ENCODE measurements at regions of chr2 and their contacts with region 1.

Region 1: DNA sequence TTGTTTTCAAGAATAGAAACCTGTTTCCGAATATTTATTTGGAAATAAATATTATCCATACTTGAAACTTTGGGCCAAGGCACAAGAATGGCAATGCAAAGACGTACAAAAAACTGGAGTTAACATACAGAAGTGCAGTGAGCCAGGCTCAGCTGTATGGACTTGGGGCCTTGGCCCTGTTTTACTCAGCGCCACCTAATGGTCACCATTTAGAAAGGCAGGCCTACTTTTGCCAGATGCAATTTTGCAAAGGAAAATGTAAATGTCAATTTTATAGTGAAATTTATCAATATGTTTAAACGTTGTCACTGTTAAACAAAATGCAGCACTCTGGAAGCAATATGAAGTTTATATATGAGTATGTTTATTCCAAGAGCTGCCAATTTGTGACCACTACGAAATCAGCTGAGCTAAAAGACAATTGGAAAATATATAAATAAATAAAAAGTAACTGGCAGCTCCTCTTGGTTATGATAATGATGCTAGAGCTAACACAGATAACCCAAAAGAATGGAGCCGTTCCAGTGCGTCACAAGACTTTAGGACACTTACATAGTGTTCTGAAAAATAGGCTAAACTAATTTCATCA is 155.0 kb downstream of the ARHGAP15 start:
- DNase-seq: peak; percentile 67 to 80 (median 75)
- H3K4me3 ChIP-seq: no peak overlapping the region
- H3K27ac ChIP-seq: no peak overlapping the region
- H3K4me1 ChIP-seq: no peaks in the 10 kb centered on the region
- H3K27me3 ChIP-seq: no peaks in the 10 kb centered on the region

Region 2: DNA sequence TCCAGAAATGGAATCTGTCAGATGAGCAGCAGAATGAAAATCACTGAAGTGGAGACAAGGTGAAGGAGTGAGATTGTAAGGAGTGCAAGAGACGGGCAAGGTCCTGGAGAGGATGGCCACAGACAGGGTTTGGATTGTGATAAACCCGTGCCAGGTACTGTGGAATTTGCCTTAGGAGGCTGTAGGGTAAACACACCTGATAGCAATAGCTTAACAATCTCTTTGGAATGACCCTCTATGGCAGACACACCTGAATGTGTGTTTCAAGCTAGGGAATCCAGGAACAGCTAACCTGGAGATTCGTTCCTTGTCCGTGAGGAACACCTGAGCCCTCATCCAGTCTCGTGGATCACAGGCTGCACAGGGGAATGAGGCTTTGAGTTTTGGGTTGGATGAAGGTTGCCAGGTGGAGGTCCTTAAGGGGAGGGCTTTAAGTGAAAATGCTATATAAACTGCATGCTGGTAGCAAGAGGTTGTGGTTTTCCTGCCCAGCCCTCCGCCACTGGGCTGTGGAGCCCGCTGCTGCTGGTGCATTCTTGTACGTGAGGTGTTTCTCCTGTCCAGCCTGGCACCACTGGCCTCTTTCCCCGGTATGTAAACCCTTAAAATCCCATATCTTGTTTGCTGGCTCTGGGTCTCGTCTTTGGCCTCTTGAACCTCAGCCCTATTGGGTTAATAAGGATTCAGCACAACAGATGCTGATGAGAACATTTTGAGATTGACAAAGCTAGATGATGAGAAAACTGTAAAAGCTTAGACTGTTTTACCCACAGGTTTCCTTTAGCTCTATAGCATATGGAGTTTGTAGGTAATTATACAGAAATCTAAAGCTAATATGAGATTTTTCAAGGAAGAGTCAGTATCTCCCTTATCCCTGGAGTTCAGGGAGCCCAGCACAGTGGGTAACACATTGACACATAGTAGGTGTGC is 37.1 kb before region 1 on chr2:
- CTCF ChIA-PET with region 1: no interaction called
- POLR2A ChIA-PET with region 1: no interaction called
- DNase-seq: peak in 2 of 3 donors; percentile 51 to 65
- H3K4me3 ChIP-seq: peak overlapping the region in 2 of 7 experiments; percentile 11 to 56
- H3K27ac ChIP-seq: no peak overlapping the region
- H3K4me1 ChIP-seq: peaks cover 8 to 32% (median 20%) of the 10 kb centered on the region in 4 experiments
- H3K27me3 ChIP-seq: no peaks in the 10 kb centered on the region

Region 3: DNA sequence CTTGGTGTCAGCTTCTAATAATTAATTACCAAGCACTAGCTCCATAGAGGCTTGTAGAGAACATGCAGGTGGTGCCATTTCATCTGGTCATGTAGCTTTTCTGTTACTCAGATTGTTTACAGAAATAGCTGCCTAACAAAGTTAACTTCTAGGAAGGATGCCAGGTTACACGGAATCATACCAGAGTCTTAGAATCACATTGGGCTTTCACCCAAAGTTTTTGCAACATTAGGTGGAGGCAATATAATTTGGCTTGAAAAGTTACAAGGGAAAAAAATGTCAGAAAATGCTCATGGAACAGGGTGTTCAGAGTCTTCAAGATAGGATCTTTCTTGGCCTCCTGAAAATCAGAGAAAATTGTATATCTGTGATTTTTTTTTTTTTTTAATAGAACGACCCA is 19.3 kb before region 1 on chr2:
- CTCF ChIA-PET with region 1: interaction called, 29 read pairs
- POLR2A ChIA-PET with region 1: no interaction called
- DNase-seq: no peak
- H3K4me3 ChIP-seq: no peak overlapping the region
- H3K27ac ChIP-seq: no peak overlapping the region
- H3K4me1 ChIP-seq: peaks cover 3 to 24% (median 9%) of the 10 kb centered on the region in 4 experiments
- H3K27me3 ChIP-seq: no peaks in the 10 kb centered on the region

Measured in common myeloid progenitor, CD34-positive (primary cell).